ENCODE measurements at regions of chr16 and their contacts with region 1.

Region 1: DNA sequence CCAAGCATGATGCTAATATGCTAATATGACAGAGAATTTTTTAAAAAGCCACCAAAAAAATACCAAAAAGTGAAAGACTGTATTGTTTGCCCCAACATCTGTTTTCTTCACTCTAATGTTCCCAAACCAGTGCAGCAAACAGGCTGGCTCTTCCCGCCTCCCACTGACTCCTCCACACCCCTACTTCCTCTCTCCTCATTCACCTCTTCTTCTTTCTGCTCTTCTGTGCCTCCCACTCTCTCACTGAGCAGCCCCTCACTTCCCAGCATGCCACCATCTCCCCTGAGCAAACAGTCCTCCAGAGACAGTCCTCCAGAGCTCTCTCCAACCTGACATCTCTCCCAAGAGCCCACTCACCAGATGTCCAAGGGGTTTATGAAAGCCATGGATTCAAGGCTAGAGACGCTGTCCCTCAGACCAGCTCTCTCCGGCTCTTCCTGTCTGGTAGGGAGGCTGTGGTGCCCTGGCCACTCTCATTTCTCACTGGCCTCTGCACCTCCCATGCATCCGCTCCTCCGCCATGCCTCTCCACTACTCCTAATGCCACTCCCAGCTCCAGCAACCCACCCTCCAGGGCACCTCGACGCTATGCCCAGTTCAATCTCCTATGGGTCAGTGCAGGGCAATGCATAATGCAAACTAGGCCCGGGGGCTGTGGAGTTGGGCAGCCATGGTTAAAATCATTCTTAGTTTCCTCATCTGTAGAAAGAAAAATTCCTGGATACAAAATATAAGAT is 52.9 kb downstream of the ANKRD11 start:
- DNase-seq: no peak
- H3K4me3 ChIP-seq: no peak overlapping the region
- H3K27ac ChIP-seq: no peak overlapping the region
- H3K4me1 ChIP-seq: peaks cover 0 to 4% of the 10 kb centered on the region in 2 donors
- H3K27me3 ChIP-seq: no peaks in the 10 kb centered on the region
- CTCF ChIP-seq: no peak
- POLR2A ChIP-seq: no peak

Region 2: GRCh38 chr16:89460553-89460952 is 23.1 kb after region 1 on chr16:
- intact Hi-C with region 1: loop called (anchors 1 kb)
- DNase-seq: no peak
- H3K4me3 ChIP-seq: no peak overlapping the region
- H3K27ac ChIP-seq: no peak overlapping the region
- H3K4me1 ChIP-seq: no peaks in the 10 kb centered on the region
- H3K27me3 ChIP-seq: no peaks in the 10 kb centered on the region
- CTCF ChIP-seq: no peak
- POLR2A ChIP-seq: no peak

Region 3: DNA sequence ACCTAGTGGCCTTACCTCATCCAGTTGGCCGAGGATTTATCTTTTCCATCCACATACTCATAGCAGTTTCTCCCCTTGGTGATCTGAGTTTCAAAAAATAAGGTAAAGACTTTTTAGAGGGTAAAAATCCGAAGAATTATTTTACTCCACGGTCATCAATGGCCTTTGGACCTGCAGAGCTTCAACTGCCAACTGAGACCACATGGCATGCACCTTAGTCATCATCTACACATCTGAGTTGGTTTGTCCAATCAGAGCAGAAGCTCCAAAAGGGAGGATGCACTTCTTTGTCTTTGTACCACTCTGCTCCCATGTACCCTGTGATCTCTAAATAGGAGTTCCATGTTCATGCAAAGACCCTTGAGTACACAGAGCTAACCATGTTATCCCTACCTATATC is 624.0 kb after region 1 on chr16:
- intact Hi-C with region 1: no loop called
- DNase-seq: no peak
- H3K4me3 ChIP-seq: no peak overlapping the region
- H3K27ac ChIP-seq: no peak overlapping the region
- H3K4me1 ChIP-seq: no peaks in the 10 kb centered on the region
- H3K27me3 ChIP-seq: no peaks in the 10 kb centered on the region
- CTCF ChIP-seq: no peak
- POLR2A ChIP-seq: no peak